ENCODE measurements at regions of chr14 and their contacts with region 1.

Region 1: GRCh38 chr14:51957950-51958349 is 31.4 kb upstream of the RTRAF start:
- DNase-seq: no peak
- H3K4me3 ChIP-seq: no peak overlapping the region
- H3K27ac ChIP-seq: no peak overlapping the region
- H3K4me1 ChIP-seq: no peaks in the 10 kb centered on the region
- H3K27me3 ChIP-seq: no peaks in the 10 kb centered on the region
- CTCF ChIP-seq: no peak

Region 2: DNA sequence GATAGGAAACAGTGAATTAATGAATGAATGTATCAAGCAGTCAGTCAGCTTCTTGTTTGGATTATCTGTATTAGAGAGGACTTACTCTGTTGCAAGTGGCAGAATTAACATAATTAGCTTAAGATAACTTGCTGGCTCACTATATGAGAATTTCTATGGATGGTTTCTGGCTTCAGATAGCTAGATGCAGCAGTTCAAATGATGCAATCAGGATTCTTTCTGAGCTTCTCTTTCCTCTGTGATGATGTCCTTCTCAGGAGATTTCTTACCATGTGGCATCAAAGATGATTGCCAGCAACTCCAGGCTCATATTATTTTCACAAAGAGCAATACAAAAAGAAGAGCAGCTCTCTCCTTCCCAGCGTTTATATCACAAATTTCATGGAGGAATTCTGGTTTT is 275.5 kb before region 1 on chr14:
- CTCF ChIA-PET with region 1: no interaction called
- dilution Hi-C with region 1: no loop called
- in situ Hi-C with region 1: no loop called
- intact Hi-C with region 1: no loop called
- DNase-seq: no peak
- H3K4me3 ChIP-seq: no peak overlapping the region
- H3K27ac ChIP-seq: no peak overlapping the region
- H3K4me1 ChIP-seq: peaks cover 5% of the 10 kb centered on the region
- H3K27me3 ChIP-seq: no peaks in the 10 kb centered on the region
- CTCF ChIP-seq: no peak

Region 3: DNA sequence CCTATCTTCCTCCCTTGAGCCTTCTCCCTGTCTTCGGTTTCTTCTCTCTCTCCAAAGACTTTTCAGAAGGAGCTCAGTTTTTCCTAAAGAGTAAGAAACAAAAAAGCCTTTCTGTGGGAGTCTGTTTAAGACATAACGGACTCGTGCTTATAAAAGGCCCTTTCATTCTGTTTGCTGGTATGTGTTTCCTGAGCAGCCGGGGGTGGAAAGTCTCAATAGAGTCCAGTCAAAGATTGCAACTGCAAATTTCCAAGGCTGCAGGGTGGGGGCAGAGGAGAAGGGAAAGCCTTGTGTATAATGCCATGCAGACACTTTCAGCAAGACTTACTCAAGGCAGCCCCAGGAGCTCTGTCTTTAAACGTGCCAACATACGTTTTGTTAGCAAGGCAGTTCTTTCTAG is 35.3 kb before region 1 on chr14:
- CTCF ChIA-PET with region 1: no interaction called
- dilution Hi-C with region 1: no loop called
- in situ Hi-C with region 1: no loop called
- intact Hi-C with region 1: loop called (anchors 1 kb)
- DNase-seq: peak; percentile 6
- H3K4me3 ChIP-seq: no peak overlapping the region
- H3K27ac ChIP-seq: no peak overlapping the region
- H3K4me1 ChIP-seq: no peaks in the 10 kb centered on the region
- H3K27me3 ChIP-seq: no peaks in the 10 kb centered on the region
- CTCF ChIP-seq: no peak

Measured in mammary epithelial cell (primary cell).